HepG2 (cell line): ENCODE measurements at regions of chr14 and their contacts with region 1.

Region 1: DNA sequence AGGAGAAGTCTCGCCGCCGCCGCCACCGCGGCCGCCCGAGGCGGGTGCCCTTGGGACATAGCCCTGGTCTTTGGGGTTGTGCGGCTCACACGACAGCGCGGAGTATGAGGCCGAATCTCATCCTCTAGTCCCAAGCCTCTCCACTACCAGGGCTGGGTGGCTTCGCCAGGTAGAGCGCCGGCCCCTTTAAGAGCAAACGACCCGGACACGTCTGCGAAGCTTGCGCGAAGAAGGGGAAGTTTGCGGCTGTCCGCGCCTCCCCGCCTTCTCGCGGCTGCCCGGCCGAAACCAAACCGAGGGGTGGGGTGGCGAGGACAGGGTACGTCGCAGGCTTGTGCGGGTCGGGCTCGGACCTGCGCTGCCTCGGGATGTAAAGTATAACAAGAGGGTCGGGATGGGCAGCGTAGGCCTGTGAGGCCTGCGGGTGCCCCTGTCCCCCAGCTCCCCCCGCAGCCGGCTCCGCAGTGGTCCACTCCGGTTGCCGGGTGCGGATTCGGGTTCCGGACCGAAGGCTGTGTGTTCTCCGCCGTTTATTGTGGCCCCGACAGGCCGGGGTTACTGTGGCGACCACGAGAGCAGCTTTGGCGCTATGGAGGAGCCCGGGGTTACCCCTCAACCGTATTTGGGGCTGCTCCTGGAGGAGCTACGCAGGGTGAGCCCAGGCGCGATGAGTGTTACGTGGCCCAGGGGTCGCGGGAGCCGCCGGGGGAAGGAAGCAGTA is 33.3 kb downstream of the MIA2 start:
- DNase-seq: peak; percentile 86
- ATAC-seq: peak; percentile 88
- H3K4me3 ChIP-seq: peak overlapping the region; percentile 72 to 91 (median 74)
- H3K27ac ChIP-seq: peak overlapping the region; percentile 93
- H3K4me1 ChIP-seq: peaks cover 56% of the 10 kb centered on the region
- H3K27me3 ChIP-seq: no peaks in the 10 kb centered on the region; a peak in 1 of 5 replicates
- CTCF ChIP-seq: no peak
- EP300 ChIP-seq: no peak
- POLR2A ChIP-seq: peak in 1 of 2 experiments; percentile 88; a peak in 2 of 4 replicates
- RAD21 ChIP-seq: no peak; the same call in none of the 2 replicates

Region 2: DNA sequence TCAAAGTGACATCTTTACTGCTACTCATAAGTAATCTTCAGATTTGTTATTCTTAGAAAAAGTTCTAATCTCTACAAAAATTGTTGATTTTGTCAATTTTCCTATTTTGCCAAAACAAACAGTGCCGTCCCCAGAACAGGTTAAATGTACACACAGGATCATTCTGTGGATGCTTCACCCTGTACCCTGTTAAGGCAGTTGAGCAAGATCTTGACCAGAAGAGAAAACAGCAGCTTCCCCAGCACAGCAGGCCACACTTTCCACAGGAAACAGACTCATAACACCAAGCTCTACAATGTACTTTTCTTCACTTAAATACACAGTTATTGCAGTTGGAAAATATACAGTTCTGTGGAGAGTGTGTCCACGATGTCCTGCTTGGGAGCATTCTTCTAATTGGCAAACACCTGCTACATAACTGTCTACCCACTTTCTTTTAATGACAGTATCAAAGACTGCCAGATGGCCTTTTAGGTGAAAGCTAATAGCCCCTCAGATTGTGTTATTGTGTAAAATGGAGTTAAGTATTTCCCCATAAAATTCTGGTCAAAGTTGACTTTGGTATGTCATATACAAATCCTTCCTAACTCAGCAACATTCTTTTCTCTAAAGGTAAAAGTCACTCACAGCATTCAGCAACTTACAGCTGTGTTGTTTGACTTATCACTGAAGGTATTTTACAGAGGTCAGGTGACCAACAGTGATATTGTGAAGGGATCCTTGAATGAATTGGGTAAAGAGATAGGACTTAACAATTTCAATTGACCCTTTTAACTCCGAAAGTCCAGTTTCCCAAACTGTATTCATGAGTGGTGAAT is 241.0 kb before region 1 on chr14:
- CTCF ChIA-PET with region 1: no interaction called
- POLR2A ChIA-PET with region 1: interaction called, 11 read pairs
- in situ Hi-C with region 1: no loop called
- intact Hi-C with region 1: loop called (anchors 1 kb)
- DNase-seq: peak; percentile 87
- ATAC-seq: peak; percentile 74
- H3K4me3 ChIP-seq: peak overlapping the region in 1 of 3 experiments; percentile 8; a peak in 1 of 6 replicates
- H3K27ac ChIP-seq: peak overlapping the region; percentile 74
- H3K4me1 ChIP-seq: peaks cover 48% of the 10 kb centered on the region
- H3K27me3 ChIP-seq: no peaks in the 10 kb centered on the region
- CTCF ChIP-seq: 0 out of 2 replicates have a peak, but pooled peaks have one; percentile 8
- EP300 ChIP-seq: peak in 1 of 2 experiments; percentile 86; a peak in 2 of 4 replicates
- POLR2A ChIP-seq: no peak
- RAD21 ChIP-seq: peak; percentile 32; the same call in 1 of the 2 replicates

Region 3: GRCh38 chr14:39174560-39175444 is 92.2 kb before region 1 on chr14 and contains the start of gene PNN:
- CTCF ChIA-PET with region 1: no interaction called
- POLR2A ChIA-PET with region 1: interaction called, 138 read pairs
- in situ Hi-C with region 1: no loop called
- intact Hi-C with region 1: loop called (anchors 2 kb)
- DNase-seq: peak; percentile 100
- ATAC-seq: peak; percentile 92
- H3K4me3 ChIP-seq: peak within 1 kb of the TSS; percentile 80 to 96 (median 80)
- H3K27ac ChIP-seq: peak within 1 kb of the TSS; percentile 88
- H3K4me1 ChIP-seq: peaks cover 52% of the 10 kb centered on the region
- H3K27me3 ChIP-seq: peaks cover 0 to 2% of the 10 kb centered on the region in 2 experiments; a peak in 1 of 5 replicates
- CTCF ChIP-seq: 0 out of 2 replicates have a peak, but pooled peaks have one; percentile 2
- EP300 ChIP-seq: peak; percentile 69 to 97
- POLR2A ChIP-seq: peak in 1 of 2 experiments; percentile 98; a peak in 2 of 4 replicates
- RAD21 ChIP-seq: peak; percentile 66
- total RNA-seq, gene PNN: 110 and 214 TPM in 2 replicates

Region 4: GRCh38 chr14:39203659-39204606 is 63.1 kb before region 1 on chr14:
- CTCF ChIA-PET with region 1: no interaction called
- POLR2A ChIA-PET with region 1: interaction called, 23 read pairs
- in situ Hi-C with region 1: no loop called
- intact Hi-C with region 1: no loop called
- DNase-seq: peak; percentile 70
- ATAC-seq: peak; percentile 83
- H3K4me3 ChIP-seq: peak overlapping the region in 1 of 3 experiments; percentile 27; a peak in 2 of 6 replicates
- H3K27ac ChIP-seq: peak overlapping the region; percentile 49
- H3K4me1 ChIP-seq: peaks cover 30% of the 10 kb centered on the region
- H3K27me3 ChIP-seq: no peaks in the 10 kb centered on the region
- CTCF ChIP-seq: no peak
- EP300 ChIP-seq: no peak
- POLR2A ChIP-seq: no peak
- RAD21 ChIP-seq: no peak

Region 5: DNA sequence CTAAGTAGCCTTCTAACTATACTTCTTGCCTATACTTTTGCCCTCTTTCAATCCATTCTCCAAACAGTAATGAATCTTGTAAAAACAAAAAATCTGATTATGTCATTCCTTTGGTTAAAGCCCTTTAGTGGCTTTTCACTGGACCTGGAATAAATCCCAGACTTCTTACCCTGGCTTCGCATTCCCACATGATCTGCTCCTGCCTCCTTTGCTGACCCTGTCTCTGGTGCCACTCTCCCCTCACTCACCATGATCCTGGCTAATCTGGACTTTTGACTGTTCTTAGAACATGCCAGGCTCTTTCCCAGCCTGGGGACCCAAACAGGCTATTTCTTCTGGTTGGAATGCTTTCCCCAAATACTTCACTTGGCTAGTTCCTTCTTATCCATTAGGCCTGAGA is 25.4 kb before region 1 on chr14:
- CTCF ChIA-PET with region 1: no interaction called
- POLR2A ChIA-PET with region 1: interaction called, 26 read pairs
- in situ Hi-C with region 1: no loop called
- intact Hi-C with region 1: no loop called
- DNase-seq: no peak
- ATAC-seq: no peak
- H3K4me3 ChIP-seq: no peak overlapping the region
- H3K27ac ChIP-seq: no peak overlapping the region
- H3K4me1 ChIP-seq: peaks cover under 1% of the 10 kb centered on the region
- H3K27me3 ChIP-seq: no peaks in the 10 kb centered on the region; a peak in 1 of 5 replicates
- CTCF ChIP-seq: no peak
- EP300 ChIP-seq: no peak
- POLR2A ChIP-seq: no peak
- RAD21 ChIP-seq: no peak

Region 6: GRCh38 chr14:39291701-39292100 is 24.7 kb after region 1 on chr14:
- CTCF ChIA-PET with region 1: no interaction called
- POLR2A ChIA-PET with region 1: interaction called, 19 read pairs
- in situ Hi-C with region 1: no loop called
- intact Hi-C with region 1: no loop called
- DNase-seq: no peak
- ATAC-seq: no peak; the same call in 2 of the 3 replicates
- H3K4me3 ChIP-seq: no peak overlapping the region
- H3K27ac ChIP-seq: no peak overlapping the region
- H3K4me1 ChIP-seq: no peaks in the 10 kb centered on the region
- H3K27me3 ChIP-seq: no peaks in the 10 kb centered on the region
- CTCF ChIP-seq: no peak
- EP300 ChIP-seq: no peak
- POLR2A ChIP-seq: no peak
- RAD21 ChIP-seq: no peak

Region 7: GRCh38 chr14:39432179-39432618 is 165.2 kb after region 1 on chr14 and contains the start of gene FBXO33:
- CTCF ChIA-PET with region 1: no interaction called
- POLR2A ChIA-PET with region 1: interaction called, 41 read pairs
- in situ Hi-C with region 1: no loop called
- intact Hi-C with region 1: loop called (anchors 1 kb)
- DNase-seq: peak; percentile 98
- ATAC-seq: peak; percentile 87
- H3K4me3 ChIP-seq: peak within 1 kb of the TSS; percentile 88 to 98 (median 94)
- H3K27ac ChIP-seq: peak within 1 kb of the TSS; percentile 98
- H3K4me1 ChIP-seq: peaks cover 37% of the 10 kb centered on the region
- H3K27me3 ChIP-seq: no peaks in the 10 kb centered on the region; a peak in 1 of 5 replicates
- CTCF ChIP-seq: no peak
- EP300 ChIP-seq: peak in 1 of 2 experiments; percentile 77; a peak in 2 of 4 replicates
- POLR2A ChIP-seq: no peak
- RAD21 ChIP-seq: peak; percentile 27; the same call in 1 of the 2 replicates
- total RNA-seq, gene FBXO33: 15.5 and 23.3 TPM in 2 replicates